ENCODE measurements at regions of chr18 and their contacts with region 1.

Region 1: GRCh38 chr18:31965316-31965970 is 22.5 kb upstream of the TRAPPC8 start:
- DNase-seq: no peak
- H3K4me3 ChIP-seq: no peak overlapping the region
- H3K4me3 Mint-ChIP-seq: no peak overlapping the region
- H3K27ac ChIP-seq: no peak overlapping the region
- H3K27ac Mint-ChIP-seq: no peak overlapping the region
- H3K4me1 ChIP-seq: no peaks in the 10 kb centered on the region
- H3K4me1 Mint-ChIP-seq: no peaks in the 10 kb centered on the region
- H3K27me3 ChIP-seq: no peaks in the 10 kb centered on the region
- H3K27me3 Mint-ChIP-seq: no peaks in the 10 kb centered on the region

Region 2: DNA sequence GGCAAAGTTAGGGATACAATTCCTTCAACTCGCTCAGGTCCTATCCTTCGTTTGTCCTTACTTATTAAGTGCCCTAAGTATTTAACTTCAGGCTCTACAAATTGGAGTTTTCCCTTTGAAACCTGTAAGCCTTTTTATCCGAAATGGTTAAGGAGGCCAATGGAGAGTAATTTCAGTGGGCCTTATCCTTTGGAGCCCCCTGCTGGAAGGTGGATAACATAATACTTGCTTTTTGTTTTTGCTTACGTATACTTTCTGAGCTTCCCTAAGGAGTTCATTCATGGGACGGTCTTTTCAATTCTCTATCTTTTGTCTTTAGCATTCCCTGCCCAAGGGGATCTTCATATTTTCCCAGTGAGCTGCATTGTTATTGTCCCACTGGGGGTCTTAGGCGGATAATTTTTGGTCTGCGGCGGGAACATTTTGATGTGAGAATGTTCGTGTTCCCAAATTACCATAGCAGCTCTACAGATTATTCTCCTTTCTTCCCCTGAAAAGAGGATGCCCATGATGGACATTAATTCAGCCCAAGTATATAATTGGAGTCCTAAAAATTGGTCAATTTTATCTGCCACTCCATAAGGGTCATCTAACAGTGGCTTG is 11.9 kb after region 1 on chr18:
- CTCF ChIA-PET with region 1: interaction called, 10 read pairs
- POLR2A ChIA-PET with region 1: no interaction called
- DNase-seq: peak in 3 of 5 donors; percentile 4 to 42 (median 34)
- H3K4me3 ChIP-seq: no peak overlapping the region
- H3K4me3 Mint-ChIP-seq: no peak overlapping the region
- H3K27ac ChIP-seq: no peak overlapping the region
- H3K27ac Mint-ChIP-seq: peak overlapping the region in 1 of 8 donors; percentile 14
- H3K4me1 ChIP-seq: no peaks in the 10 kb centered on the region
- H3K4me1 Mint-ChIP-seq: peaks cover 0 to 4% (median 1%) of the 10 kb centered on the region in 3 donors
- H3K27me3 ChIP-seq: no peaks in the 10 kb centered on the region
- H3K27me3 Mint-ChIP-seq: no peaks in the 10 kb centered on the region

Measured in CD8-positive, alpha-beta memory T cell (primary cell).